ENCODE measurements at regions of chr5 and their contacts with region 1.

Region 1: GRCh38 chr5:155434681-155435080 is 421.1 kb downstream of the KIF4B start:
- DNase-seq: no peak
- CTCF ChIP-seq: no peak

Region 2: GRCh38 chr5:155406815-155407214 is 27.9 kb before region 1 on chr5:
- CTCF ChIA-PET with region 1: no interaction called
- POLR2A ChIA-PET with region 1: no interaction called
- DNase-seq: no peak
- CTCF ChIP-seq: no peak

Region 3: DNA sequence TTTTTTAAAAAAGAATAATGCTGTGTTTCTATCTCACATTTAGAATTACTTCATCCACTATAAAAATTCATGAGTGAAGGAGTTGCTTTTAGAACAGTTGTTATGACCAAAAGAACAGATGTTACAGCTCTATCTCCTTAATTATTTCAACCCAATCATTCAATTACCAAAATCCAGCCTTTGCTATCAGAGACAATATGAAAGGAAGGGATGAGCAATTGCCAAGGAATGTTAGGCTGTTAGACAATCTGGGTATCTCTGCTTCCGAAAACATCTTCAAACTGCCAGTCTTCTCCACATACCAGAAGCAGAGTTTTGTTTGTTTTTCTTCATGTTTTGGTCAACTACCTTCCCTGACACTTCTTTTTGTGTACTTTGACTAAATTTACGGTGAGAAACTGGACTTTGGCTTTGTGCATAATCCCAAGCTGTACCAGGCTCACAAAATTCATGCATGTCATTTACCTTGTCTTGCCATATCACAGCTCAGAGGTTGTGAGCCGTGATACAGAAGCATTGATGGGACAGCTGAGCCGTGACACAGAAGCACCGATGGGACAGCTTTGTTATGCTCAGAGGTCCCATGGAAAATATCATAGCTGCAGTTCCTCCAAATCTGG is 15.6 kb before region 1 on chr5:
- CTCF ChIA-PET with region 1: interaction called, 10 read pairs
- POLR2A ChIA-PET with region 1: no interaction called
- DNase-seq: no peak
- CTCF ChIP-seq: no peak

Measured in GM10248 (cell line).